ENCODE measurements at regions of chr17 and their contacts with region 1.

Region 1: DNA sequence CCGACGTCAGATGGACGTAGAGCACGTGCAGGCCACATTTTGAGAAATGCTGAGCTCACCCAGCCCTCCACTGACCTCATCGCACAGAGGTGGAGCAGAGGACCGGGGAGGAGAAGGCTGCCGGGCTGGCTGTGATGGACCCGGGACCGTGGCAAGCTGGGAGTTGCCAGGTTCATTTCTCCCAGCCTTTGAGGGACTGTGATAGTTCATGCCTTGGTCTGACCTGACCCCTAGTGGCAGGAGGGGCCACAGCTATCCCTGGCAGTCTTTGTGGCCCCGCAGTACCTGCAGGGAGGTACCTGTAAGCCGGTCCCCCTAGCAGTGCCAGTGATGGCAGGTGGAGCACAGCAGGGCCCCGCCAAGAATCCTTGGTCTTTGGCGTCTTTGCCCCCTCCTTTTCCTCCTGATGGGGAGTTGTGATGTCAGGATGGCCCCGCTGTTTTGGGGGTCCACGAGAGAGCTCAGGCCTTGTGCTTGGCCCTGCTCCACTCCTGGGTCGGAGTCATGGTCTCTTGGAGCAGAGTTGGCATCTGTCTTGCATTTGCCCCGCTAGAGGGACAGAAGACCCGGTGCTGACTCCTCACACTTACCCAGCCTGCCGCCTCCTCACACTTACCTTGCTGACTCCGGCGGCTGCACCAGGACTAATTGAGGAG is 50.4 kb downstream of the OR1D5 start:
- DNase-seq: peak; percentile 82
- H3K4me3 ChIP-seq: no peak overlapping the region
- H3K27ac ChIP-seq: no peak overlapping the region
- H3K4me1 ChIP-seq: peaks cover 4% of the 10 kb centered on the region
- CTCF ChIP-seq: peak; percentile 89

Region 2: GRCh38 chr17:2828397-2829038 is 184.5 kb before region 1 on chr17:
- CTCF ChIA-PET with region 1: no interaction called
- POLR2A ChIA-PET with region 1: interaction called, 6 read pairs
- intact Hi-C with region 1: loop called (anchors 1 kb)
- DNase-seq: peak; percentile 87
- H3K4me3 ChIP-seq: no peak overlapping the region
- H3K27ac ChIP-seq: no peak overlapping the region
- H3K4me1 ChIP-seq: peaks cover 26% of the 10 kb centered on the region
- CTCF ChIP-seq: peak; percentile 88

Region 3: DNA sequence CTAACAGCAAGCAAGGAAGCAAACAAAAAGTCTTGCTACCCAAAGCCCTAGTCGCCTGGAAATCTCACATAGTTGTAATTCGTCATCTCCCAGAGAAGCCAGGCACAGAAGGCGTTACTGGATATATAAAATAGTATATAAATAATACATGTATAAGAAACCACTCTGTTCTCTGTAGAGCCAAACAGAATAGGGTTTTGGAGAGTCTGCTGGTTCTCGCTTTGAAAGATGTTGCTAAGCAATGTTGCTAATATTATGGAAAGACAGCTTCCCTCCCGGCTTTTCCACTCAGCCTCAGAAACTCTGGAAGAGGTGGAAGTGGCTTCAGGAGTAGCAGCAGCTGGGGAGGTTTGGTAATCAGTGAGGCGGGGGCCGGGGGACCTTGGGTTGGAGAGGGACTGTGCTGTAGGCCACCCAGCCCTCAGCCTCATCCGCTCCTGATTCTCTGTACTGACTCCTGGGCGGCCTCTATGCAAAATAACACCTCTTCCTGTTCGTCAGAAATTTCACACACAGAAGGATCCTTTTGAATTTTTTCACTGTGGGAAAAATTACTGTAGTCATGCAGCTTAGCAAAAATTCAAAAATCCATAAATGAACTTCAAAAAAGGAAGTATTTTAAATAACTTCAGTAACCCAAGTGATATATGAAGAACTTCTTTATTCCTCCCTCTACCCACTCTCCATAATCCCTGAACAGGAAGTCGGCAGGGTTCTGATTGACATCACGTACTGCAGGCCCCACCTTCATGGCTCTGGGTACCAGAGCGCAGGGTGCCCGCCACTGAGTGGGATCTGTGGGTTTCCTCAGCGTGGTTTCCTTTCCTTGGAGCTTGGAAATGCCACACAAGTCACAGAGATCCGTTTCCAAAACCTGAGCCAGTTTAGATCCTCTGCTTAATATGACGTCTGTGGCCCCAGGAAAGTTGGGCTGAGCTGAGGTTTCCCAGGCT is 165.4 kb before region 1 on chr17:
- CTCF ChIA-PET with region 1: interaction called, 9 read pairs
- POLR2A ChIA-PET with region 1: interaction called, 3 read pairs
- intact Hi-C with region 1: loop called (anchors 1 kb)
- DNase-seq: peak; percentile 60
- H3K4me3 ChIP-seq: peak overlapping the region; percentile 29
- H3K27ac ChIP-seq: peak overlapping the region; percentile 50
- H3K4me1 ChIP-seq: peaks cover 49% of the 10 kb centered on the region
- CTCF ChIP-seq: no peak

Region 4: GRCh38 chr17:2929881-2930533 is 83.0 kb before region 1 on chr17:
- CTCF ChIA-PET with region 1: interaction called, 3 read pairs
- POLR2A ChIA-PET with region 1: interaction called, 3 read pairs
- intact Hi-C with region 1: loop called (anchors 1 kb)
- DNase-seq: peak; percentile 70
- H3K4me3 ChIP-seq: no peak overlapping the region
- H3K27ac ChIP-seq: peak overlapping the region; percentile 89
- H3K4me1 ChIP-seq: peaks cover 42% of the 10 kb centered on the region
- CTCF ChIP-seq: peak; percentile 90

Measured in OCI-LY7 (cell line).